ENCODE measurements at regions of chr7 and their contacts with region 1.

Region 1: GRCh38 chr7:101507791-101508252 is 121.3 kb downstream of the MYL10 start:
- DNase-seq: peak; percentile 78 to 87
- H3K4me3 ChIP-seq: no peak overlapping the region
- H3K4me3 Mint-ChIP-seq: no peak overlapping the region
- H3K27ac Mint-ChIP-seq: no peak overlapping the region
- H3K4me1 ChIP-seq: no peaks in the 10 kb centered on the region
- H3K4me1 Mint-ChIP-seq: peaks cover 6% of the 10 kb centered on the region
- H3K27me3 ChIP-seq: no peaks in the 10 kb centered on the region
- H3K27me3 Mint-ChIP-seq: no peaks in the 10 kb centered on the region
- CTCF ChIP-seq: peak; percentile 93 to 98

Region 2: GRCh38 chr7:101244375-101245146 is 263.3 kb before region 1 on chr7 and contains the start of gene FIS1:
- CTCF ChIA-PET with region 1: interaction called, 14 read pairs
- POLR2A ChIA-PET with region 1: no interaction called
- intact Hi-C with region 1: no loop called
- DNase-seq: peak; percentile 94 to 95
- H3K4me3 ChIP-seq: peak within 1 kb of the TSS; percentile 95
- H3K4me3 Mint-ChIP-seq: peak within 1 kb of the TSS; percentile 92
- H3K27ac Mint-ChIP-seq: peak within 1 kb of the TSS; percentile 93
- H3K4me1 ChIP-seq: peaks cover 13% of the 10 kb centered on the region; the same call in 1 of the 2 replicates
- H3K4me1 Mint-ChIP-seq: peaks cover 10% of the 10 kb centered on the region
- H3K27me3 ChIP-seq: no peaks in the 10 kb centered on the region
- H3K27me3 Mint-ChIP-seq: no peaks in the 10 kb centered on the region
- CTCF ChIP-seq: peak; percentile 93 to 95
- total RNA-seq, gene FIS1: 97.9 and 99.9 TPM in 2 replicates

Region 3: DNA sequence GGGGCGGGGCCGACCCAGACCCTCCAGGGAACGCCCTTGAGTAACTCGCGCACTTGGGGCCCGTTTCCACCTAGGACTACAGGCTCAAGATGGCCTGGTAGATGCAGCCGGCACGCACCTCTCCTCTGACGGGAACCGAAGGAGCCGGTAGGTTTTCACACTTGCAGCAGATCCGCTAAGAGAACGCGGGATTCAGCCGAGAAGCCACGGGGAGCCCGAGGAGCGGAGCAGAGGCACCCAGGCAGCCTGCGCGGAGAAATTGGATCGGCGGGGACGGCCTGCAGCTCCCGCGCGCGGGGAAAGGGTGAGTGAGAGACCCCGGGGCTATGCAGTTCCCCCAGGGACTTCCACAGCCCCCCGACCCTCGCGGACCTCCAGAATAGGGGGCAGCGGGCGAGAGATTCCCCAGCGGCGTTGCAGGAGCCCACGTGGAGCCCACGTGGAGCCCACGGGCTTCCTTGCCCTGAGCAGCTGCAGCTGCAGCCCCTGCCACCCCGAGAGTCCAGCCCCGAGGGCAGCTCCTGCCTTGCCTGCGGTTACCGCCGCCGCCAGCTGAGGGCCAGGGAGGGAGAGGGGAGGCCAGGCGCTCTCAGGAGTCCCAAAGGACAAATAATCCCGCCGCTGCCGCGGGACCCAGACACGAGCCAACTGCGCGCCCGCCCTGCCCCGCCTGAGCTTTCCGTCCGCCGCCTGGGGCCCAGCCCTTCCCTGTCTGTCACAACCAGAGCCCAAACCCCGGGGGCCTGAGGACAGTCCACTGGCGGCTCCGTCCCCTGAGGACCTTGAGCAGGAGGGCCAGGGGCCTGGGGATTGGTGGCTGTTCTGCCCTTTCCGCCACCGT is 199.4 kb before region 1 on chr7:
- CTCF ChIA-PET with region 1: no interaction called
- POLR2A ChIA-PET with region 1: interaction called, 3 read pairs
- intact Hi-C with region 1: loop called (anchors 5 kb)
- DNase-seq: peak; percentile 90 to 94
- H3K4me3 ChIP-seq: peak overlapping the region; percentile 87
- H3K4me3 Mint-ChIP-seq: peak overlapping the region; percentile 100
- H3K27ac Mint-ChIP-seq: peak overlapping the region; percentile 99
- H3K4me1 ChIP-seq: no peaks in the 10 kb centered on the region
- H3K4me1 Mint-ChIP-seq: peaks cover 9% of the 10 kb centered on the region
- H3K27me3 ChIP-seq: no peaks in the 10 kb centered on the region
- H3K27me3 Mint-ChIP-seq: no peaks in the 10 kb centered on the region
- CTCF ChIP-seq: no peak

Region 4: GRCh38 chr7:101321491-101322401 is 186.1 kb before region 1 on chr7 and contains the start of gene IFT22:
- CTCF ChIA-PET with region 1: no interaction called
- POLR2A ChIA-PET with region 1: no interaction called
- intact Hi-C with region 1: loop called (anchors 1 kb)
- DNase-seq: peak; percentile 92 to 93
- H3K4me3 ChIP-seq: peak within 1 kb of the TSS; percentile 95
- H3K4me3 Mint-ChIP-seq: peak within 1 kb of the TSS; percentile 87
- H3K27ac Mint-ChIP-seq: peak within 1 kb of the TSS; percentile 91
- H3K4me1 ChIP-seq: 0 out of 2 replicates have a peak, but pooled peaks cover 5% of the 10 kb centered on the region
- H3K4me1 Mint-ChIP-seq: no peaks in the 10 kb centered on the region
- H3K27me3 ChIP-seq: no peaks in the 10 kb centered on the region
- H3K27me3 Mint-ChIP-seq: no peaks in the 10 kb centered on the region
- CTCF ChIP-seq: peak; percentile 53 to 66
- total RNA-seq, gene IFT22: 14.4 and 17.4 TPM in 2 replicates

Region 5: GRCh38 chr7:101363734-101364374 is 144.0 kb before region 1 on chr7:
- CTCF ChIA-PET with region 1: interaction called, 6 read pairs
- POLR2A ChIA-PET with region 1: no interaction called
- intact Hi-C with region 1: loop called (anchors 2 kb)
- DNase-seq: peak; percentile 75 to 89
- H3K4me3 ChIP-seq: peak overlapping the region; percentile 77
- H3K4me3 Mint-ChIP-seq: peak overlapping the region; percentile 69
- H3K27ac Mint-ChIP-seq: peak overlapping the region; percentile 31
- H3K4me1 ChIP-seq: peaks cover 5% of the 10 kb centered on the region; the same call in 1 of the 2 replicates
- H3K4me1 Mint-ChIP-seq: no peaks in the 10 kb centered on the region
- H3K27me3 ChIP-seq: no peaks in the 10 kb centered on the region
- H3K27me3 Mint-ChIP-seq: no peaks in the 10 kb centered on the region
- CTCF ChIP-seq: peak; percentile 90 to 94

Region 6: DNA sequence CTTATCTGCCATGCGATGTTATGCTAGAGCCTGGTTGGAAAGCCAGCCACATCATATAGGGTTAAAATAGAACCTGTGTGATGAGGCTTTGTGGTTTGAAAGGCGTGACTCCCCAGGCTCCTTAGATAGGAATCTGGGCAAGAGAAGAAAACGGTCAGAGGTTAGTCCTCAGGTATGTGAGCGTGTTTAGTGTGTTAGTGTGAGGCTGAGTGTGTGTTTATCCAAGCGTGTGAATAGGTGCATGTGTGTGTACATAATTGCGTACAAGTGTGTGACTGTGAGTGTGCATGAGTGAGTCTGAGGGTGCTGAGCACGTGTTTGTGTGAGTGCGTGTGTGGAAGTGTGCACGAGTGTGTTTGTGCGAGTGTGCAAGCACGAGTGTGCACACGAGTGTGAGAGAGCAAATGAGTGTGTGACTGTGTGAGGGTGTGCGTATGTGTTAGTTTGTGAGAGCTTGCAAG is 65.3 kb before region 1 on chr7:
- CTCF ChIA-PET with region 1: no interaction called
- POLR2A ChIA-PET with region 1: no interaction called
- intact Hi-C with region 1: loop called (anchors 2 kb)
- DNase-seq: peak; percentile 49 to 63
- H3K4me3 ChIP-seq: no peak overlapping the region
- H3K4me3 Mint-ChIP-seq: peak overlapping the region; percentile 45
- H3K27ac Mint-ChIP-seq: peak overlapping the region; percentile 68
- H3K4me1 ChIP-seq: peaks cover 22% of the 10 kb centered on the region
- H3K4me1 Mint-ChIP-seq: peaks cover 9% of the 10 kb centered on the region
- H3K27me3 ChIP-seq: no peaks in the 10 kb centered on the region
- H3K27me3 Mint-ChIP-seq: no peaks in the 10 kb centered on the region
- CTCF ChIP-seq: no peak

Region 7: DNA sequence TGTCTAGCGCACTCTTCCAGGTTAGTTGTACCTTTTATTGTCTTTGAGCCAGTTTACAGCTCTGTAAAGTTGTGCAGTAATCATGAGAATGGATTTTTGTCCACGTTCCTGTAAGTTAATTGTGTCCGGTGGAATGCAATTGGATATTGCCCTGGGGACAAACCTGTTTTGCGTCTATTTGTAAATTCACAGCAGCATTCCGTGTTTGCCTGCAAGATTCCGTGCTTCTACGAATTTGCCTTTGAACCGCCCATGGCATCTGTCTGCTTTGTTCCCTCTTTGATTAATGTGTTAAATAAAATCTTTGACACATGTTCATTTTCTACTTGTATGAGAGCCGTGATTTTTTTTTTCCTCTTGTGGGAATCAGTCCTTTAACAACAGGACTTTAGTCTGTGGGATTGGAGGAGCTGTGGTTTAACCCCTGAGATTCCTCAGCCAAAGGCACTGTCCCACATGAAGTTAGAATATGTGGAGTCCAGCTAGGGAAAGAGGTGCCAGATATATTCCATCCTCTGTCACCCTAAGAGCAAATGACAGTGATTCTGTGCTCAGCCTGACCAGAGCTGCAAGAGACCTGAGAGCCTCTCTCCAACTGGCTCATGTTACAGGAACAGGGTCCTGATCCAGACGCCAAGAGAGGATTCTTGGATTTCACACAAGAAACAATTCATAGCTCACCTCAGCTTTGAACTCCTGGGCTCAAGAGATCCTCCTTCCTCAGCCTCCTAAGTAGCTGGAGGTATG is 18.8 kb before region 1 on chr7:
- CTCF ChIA-PET with region 1: interaction called, 5 read pairs
- POLR2A ChIA-PET with region 1: no interaction called
- intact Hi-C with region 1: loop called (anchors 1 kb)
- DNase-seq: peak; percentile 84 to 86
- H3K4me3 ChIP-seq: peak overlapping the region; percentile 6; the same call in 1 of the 2 replicates
- H3K4me3 Mint-ChIP-seq: peak overlapping the region; percentile 74
- H3K27ac Mint-ChIP-seq: peak overlapping the region; percentile 96
- H3K4me1 ChIP-seq: peaks cover 29% of the 10 kb centered on the region
- H3K4me1 Mint-ChIP-seq: peaks cover 18% of the 10 kb centered on the region
- H3K27me3 ChIP-seq: no peaks in the 10 kb centered on the region
- H3K27me3 Mint-ChIP-seq: no peaks in the 10 kb centered on the region
- CTCF ChIP-seq: no peak

Region 8: DNA sequence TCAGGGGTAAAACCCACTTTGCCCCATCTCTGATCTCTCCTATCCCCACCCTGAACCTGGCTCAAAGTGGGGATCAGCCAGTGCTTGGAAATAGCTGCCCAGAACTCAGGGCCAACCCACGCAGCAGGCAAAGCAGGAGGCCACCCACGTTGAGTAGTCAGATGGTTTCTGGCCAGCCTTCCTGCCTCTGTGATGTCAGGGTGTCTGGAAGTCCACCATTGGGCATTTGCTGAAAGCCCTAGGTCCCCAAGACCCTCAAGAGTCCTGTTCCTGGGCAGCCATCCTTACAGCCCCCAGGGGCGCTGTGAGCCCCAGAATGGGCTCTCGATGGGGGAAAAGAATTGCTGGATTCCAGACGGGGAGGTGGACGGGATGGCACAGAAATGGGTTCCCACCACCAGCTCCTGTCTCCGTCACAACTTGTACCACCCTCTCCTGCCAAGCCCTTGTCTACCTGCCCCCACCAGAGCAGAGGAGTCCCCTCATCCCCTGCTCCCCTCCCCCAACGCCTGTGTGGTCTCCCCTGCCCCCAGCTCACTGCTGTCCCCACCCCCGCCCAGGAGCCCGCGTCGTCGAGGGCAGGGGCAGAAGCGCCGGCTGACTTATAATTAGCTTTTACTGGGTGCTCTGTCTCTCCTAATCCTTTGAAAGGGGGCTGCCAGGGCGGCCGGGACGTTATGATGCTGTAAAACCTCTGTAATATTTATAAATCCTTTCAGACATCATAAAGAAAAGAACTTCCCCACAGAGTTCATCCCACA is 117.4 kb after region 1 on chr7:
- CTCF ChIA-PET with region 1: no interaction called
- POLR2A ChIA-PET with region 1: no interaction called
- intact Hi-C with region 1: no loop called
- DNase-seq: no peak
- H3K4me3 ChIP-seq: no peak overlapping the region
- H3K4me3 Mint-ChIP-seq: no peak overlapping the region
- H3K27ac Mint-ChIP-seq: no peak overlapping the region
- H3K4me1 ChIP-seq: no peaks in the 10 kb centered on the region
- H3K4me1 Mint-ChIP-seq: peaks cover 15% of the 10 kb centered on the region
- H3K27me3 ChIP-seq: no peaks in the 10 kb centered on the region
- H3K27me3 Mint-ChIP-seq: no peaks in the 10 kb centered on the region
- CTCF ChIP-seq: no peak

Region 9: DNA sequence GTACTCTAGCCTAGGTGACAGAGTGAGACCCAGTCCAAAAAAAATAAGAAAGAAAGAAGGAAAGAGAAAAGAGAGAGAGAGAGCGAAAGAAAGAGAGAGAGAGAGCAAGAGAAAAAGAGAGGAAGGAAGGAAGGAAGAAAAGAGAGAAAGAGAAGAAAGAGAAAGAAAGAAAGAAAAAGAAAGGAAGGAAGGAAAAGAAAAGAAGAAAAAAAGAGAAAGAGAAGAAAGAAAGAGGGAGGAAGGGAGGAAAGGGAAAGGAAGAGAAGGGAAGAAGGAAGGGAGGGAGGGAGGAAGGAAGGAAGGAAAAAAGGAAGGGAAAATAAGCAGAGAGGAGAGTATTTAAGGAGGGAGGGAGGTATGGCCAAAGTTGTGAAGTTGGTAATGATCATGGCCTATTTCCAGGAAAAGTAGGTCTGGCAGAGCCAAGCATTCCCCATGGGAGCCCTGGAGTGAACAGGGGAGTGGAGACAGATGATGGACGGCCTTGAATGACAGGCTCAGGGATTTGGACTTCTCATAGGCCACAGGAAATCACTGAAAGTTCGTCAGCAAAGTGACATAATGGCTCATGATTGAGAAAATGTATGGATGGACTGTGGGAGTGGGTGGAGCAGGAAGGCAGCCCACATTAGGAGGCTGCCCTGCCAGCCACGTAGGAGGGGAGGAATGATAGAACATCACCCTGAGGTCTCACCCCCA is 264.8 kb after region 1 on chr7:
- CTCF ChIA-PET with region 1: no interaction called
- POLR2A ChIA-PET with region 1: no interaction called
- intact Hi-C with region 1: no loop called
- DNase-seq: no peak
- H3K4me3 ChIP-seq: no peak overlapping the region
- H3K4me3 Mint-ChIP-seq: no peak overlapping the region
- H3K27ac Mint-ChIP-seq: no peak overlapping the region
- H3K4me1 ChIP-seq: no peaks in the 10 kb centered on the region
- H3K4me1 Mint-ChIP-seq: no peaks in the 10 kb centered on the region
- H3K27me3 ChIP-seq: no peaks in the 10 kb centered on the region
- H3K27me3 Mint-ChIP-seq: peaks cover 8% of the 10 kb centered on the region
- CTCF ChIP-seq: no peak

Measured in Caco-2 (cell line).